MCF 10A (cell line): ENCODE measurements at regions of chr5 and their contacts with region 1.

Region 1: DNA sequence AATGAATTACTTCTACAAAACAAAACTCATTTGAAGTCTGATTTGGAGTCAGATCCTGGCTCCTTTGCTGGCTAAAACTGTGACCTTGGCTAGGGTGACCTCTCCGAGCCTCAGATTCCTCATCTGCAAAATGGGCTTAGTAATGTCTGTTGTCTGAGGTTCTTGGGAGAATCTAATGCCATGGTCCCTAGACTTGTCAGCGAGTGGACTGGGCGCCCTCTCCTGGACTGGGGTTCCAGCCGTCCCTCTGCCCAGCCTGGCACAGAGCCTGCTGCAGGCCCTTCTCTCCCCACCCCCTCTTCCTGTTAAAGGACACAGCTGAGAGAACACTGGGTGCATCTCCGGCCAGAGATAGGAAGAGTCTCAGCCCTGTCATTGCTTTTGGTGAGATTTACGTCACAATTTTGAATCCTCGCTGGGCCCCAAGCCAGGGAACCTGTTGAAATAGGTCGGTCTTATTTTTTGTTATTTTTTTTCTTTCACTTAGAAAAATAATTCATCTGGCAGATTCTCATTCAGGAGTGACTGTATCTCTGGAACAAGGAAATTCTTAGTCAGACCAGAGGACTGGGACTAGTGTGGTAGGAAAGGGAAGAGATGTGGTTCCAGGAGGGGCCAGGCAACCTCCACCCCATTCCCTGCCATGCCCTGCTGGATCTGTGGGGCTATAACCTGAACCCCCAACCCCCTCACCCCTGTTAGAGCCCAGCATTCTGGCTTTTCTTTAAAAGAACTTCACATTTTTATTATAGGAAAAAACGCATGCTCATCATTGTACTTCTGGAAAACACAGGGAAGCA is 48.2 kb upstream of the RPL26L1 start:
- DNase-seq: peak; percentile 99
- H3K4me3 Mint-ChIP-seq: no peak overlapping the region
- H3K27ac Mint-ChIP-seq: peak overlapping the region; percentile 90
- H3K4me1 Mint-ChIP-seq: peaks cover 43% of the 10 kb centered on the region
- H3K27me3 Mint-ChIP-seq: no peaks in the 10 kb centered on the region
- CTCF ChIP-seq: peak; percentile 50

Region 2: GRCh38 chr5:172123269-172123692 is 787.7 kb before region 1 on chr5:
- CTCF ChIA-PET with region 1: no interaction called
- POLR2A ChIA-PET with region 1: no interaction called
- intact Hi-C with region 1: no loop called
- DNase-seq: peak; percentile 73
- H3K4me3 Mint-ChIP-seq: no peak overlapping the region
- H3K27ac Mint-ChIP-seq: no peak overlapping the region
- H3K4me1 Mint-ChIP-seq: peaks cover 2% of the 10 kb centered on the region
- H3K27me3 Mint-ChIP-seq: no peaks in the 10 kb centered on the region
- CTCF ChIP-seq: no peak

Region 3: DNA sequence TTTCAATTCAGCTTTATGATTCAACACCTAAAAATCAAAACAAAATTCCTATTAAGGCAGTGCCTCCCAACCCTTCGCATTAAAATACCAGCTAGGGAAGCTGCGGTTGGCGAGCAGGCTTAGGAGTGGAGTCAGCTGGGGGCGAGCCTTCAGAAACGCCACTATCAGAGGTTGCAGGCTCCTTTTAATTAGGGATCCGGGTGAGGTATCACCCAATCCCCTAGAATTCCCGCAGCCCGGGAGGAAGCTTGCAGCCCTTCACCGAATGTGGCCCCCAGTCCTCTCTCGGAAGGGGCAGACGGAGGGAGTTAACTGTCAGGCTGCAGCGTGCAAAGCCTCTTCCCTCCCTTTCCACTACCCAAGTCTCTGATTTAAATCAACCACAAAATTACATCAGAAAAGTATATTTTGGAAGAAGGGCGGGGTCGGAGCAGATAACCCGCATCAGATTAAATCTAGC is 415.5 kb after region 1 on chr5:
- CTCF ChIA-PET with region 1: no interaction called
- POLR2A ChIA-PET with region 1: no interaction called
- intact Hi-C with region 1: loop called (anchors 1 kb)
- DNase-seq: peak; percentile 61
- H3K4me3 Mint-ChIP-seq: peak overlapping the region; percentile 94
- H3K27ac Mint-ChIP-seq: peak overlapping the region; percentile 81
- H3K4me1 Mint-ChIP-seq: peaks cover 55% of the 10 kb centered on the region
- H3K27me3 Mint-ChIP-seq: no peaks in the 10 kb centered on the region
- CTCF ChIP-seq: no peak